ENCODE measurements at regions of chr17 and their contacts with region 1.

Region 1: DNA sequence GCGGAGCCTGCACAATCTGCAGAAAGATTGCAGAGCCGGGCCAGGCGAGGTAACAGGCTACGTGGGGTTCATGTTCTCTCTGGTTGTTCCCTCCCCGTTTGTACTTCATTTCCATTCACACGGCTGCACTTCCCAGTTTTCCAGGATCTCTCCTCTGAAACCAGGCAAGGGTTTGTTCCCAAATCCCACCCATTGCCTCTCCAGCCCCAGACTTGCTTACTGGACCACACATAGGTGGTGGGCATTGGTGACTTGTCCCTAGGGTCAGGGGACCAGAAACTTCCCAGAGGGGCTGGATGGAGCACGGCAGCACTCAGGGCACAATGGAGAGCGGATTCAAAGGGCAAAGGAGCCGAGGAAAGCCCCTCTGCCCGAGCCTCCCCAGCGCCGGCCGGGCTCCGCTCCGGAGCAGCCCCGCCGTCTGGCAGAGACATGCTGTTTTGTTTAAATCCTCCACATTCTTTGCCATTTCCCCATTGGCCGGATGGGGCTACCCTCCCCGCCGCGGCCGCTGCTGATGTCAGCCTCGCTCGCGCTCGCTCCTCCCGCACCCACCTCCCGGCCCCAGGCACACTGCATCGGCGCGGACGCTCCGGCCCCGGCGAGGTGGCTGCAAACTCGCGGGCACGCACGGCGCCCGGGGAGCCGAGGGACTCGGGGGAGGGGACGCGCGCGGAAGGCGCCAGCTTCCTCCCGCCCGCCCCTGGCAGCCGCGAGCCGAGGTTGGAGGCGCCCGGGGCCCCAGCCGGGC is at the start of gene PITPNC1:
- DNase-seq: peak; percentile 90
- H3K4me3 Mint-ChIP-seq: peak within 1 kb of the TSS; percentile 88
- H3K27ac Mint-ChIP-seq: peak within 1 kb of the TSS; percentile 82
- H3K4me1 Mint-ChIP-seq: peaks cover 38% of the 10 kb centered on the region
- H3K27me3 Mint-ChIP-seq: no peaks in the 10 kb centered on the region
- total RNA-seq, gene PITPNC1: 58.7 to 60.0 TPM

Region 2: GRCh38 chr17:67390646-67391384 is 13.9 kb after region 1 on chr17:
- CTCF ChIA-PET with region 1: interaction called, 20 read pairs
- intact Hi-C with region 1: loop called (anchors 1 kb)
- DNase-seq: peak; percentile 89
- H3K4me3 Mint-ChIP-seq: peak overlapping the region; percentile 62
- H3K27ac Mint-ChIP-seq: peak overlapping the region; percentile 99
- H3K4me1 Mint-ChIP-seq: peaks cover 88% of the 10 kb centered on the region
- H3K27me3 Mint-ChIP-seq: no peaks in the 10 kb centered on the region

Region 3: DNA sequence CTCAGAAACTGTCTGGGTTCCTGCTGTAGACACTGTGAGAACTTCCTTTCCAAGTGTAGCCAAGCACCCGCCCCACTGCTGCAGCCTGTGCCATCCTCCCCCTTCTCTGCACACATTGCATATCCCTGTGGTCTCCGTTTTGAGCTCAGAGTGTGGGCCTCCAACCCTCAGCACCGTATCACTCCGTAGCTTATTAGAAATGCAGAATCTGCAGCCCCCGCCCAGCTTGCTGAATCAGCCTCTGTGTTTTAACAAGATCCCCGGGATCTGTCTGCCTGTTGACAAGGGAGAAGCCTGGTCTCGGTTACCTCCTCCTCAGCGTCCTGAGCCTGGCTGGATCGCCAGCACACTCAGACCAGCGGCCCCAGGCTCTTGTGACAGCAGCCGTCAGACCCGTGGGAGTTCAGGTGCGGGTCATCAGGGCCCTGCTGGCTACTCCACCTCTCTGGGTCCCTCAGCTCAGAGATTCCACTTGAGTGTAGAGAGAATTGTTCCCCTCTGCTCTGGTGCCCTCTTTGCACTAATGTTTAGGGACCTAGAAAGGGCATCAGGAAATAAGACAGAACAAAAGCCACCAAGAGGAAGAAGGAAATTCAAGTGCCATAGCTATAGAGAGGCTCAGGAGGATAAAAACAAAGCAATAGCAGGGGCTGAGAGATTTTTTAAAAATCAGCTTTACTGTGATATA is 92.4 kb after region 1 on chr17:
- CTCF ChIA-PET with region 1: interaction called, 245 read pairs
- intact Hi-C with region 1: no loop called
- DNase-seq: peak; percentile 72
- H3K4me3 Mint-ChIP-seq: peak overlapping the region; percentile 48
- H3K27ac Mint-ChIP-seq: peak overlapping the region; percentile 87
- H3K4me1 Mint-ChIP-seq: peaks cover 63% of the 10 kb centered on the region
- H3K27me3 Mint-ChIP-seq: no peaks in the 10 kb centered on the region

Region 4: DNA sequence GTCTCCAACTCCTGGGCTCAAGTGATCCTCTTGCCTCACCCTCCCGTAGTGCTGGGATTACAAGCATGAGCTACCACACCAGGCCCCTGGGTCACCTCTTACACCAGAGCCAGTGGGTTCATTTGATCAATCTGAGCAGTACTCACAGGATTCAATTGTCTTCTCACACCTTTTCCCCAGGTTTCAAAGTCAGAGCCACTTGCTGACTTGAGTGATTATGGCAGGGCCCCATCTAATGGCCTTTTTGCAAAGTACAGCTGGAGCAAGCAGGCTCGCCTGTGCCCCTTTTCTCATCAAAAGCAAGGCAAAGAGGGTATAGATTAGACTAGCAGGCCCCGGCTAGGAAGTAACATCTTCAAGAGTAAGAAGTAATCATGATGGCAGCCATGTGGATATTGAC is 226.0 kb after region 1 on chr17:
- CTCF ChIA-PET with region 1: interaction called, 38 read pairs
- intact Hi-C with region 1: loop called (anchors 1 kb)
- DNase-seq: peak; percentile 72
- H3K4me3 Mint-ChIP-seq: no peak overlapping the region
- H3K27ac Mint-ChIP-seq: no peak overlapping the region
- H3K4me1 Mint-ChIP-seq: peaks cover 14% of the 10 kb centered on the region
- H3K27me3 Mint-ChIP-seq: no peaks in the 10 kb centered on the region

Region 5: GRCh38 chr17:67717624-67718329 is 340.9 kb after region 1 on chr17 and contains the start of gene NOL11:
- CTCF ChIA-PET with region 1: interaction called, 3 read pairs
- intact Hi-C with region 1: loop called (anchors 1 kb)
- DNase-seq: peak; percentile 100
- H3K4me3 Mint-ChIP-seq: peak within 1 kb of the TSS; percentile 100
- H3K27ac Mint-ChIP-seq: peak within 1 kb of the TSS; percentile 99
- H3K4me1 Mint-ChIP-seq: peaks cover 20% of the 10 kb centered on the region
- H3K27me3 Mint-ChIP-seq: peaks cover 3% of the 10 kb centered on the region
- total RNA-seq, gene NOL11: 49.7 to 54.1 TPM

Region 6: DNA sequence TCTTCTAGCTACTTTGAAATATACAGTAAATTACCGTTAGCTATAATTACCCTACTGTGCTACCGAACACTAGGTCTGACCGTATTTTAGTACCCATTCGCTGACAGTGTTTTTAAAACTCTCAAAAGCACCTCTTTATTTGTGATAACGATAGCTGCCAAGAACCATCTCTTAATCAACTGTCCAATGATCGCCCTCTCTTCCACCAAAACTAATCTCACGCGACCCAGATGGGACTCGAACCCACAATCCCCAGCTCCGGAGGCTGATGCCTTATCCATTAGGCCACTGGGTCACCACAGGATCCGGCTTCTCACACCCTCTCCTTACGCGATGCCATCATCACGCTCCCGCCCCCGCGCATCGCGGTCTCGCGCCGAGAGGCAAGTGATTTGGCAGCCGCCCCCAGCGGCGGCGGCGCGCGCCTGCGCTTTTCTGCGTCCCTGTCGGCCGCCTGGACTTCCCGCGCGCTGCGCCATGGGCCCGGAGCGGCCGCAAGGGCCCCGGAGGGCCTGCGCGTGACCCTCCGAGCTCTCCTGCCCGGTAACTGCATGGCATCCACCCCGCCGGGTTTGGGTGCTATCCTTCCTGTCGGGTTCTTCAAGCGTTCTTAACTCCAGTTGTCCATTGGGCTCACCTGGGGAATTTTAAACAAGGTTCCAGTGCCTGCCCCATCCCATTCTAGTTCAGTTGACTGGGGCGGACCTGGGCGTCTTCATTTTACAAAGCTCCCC is 642.9 kb after region 1 on chr17:
- CTCF ChIA-PET with region 1: no interaction called
- intact Hi-C with region 1: loop called (anchors 5 kb)
- DNase-seq: peak; percentile 99
- H3K4me3 Mint-ChIP-seq: peak overlapping the region; percentile 77
- H3K27ac Mint-ChIP-seq: peak overlapping the region; percentile 94
- H3K4me1 Mint-ChIP-seq: peaks cover 11% of the 10 kb centered on the region
- H3K27me3 Mint-ChIP-seq: peaks cover 2% of the 10 kb centered on the region

Measured in activated naive CD4-positive, alpha-beta T cell treated with anti-CD3 and anti-CD28 coated beads for 36 hours (primary cell).